ENCODE measurements at regions of chr14 and their contacts with region 1.

Region 1: DNA sequence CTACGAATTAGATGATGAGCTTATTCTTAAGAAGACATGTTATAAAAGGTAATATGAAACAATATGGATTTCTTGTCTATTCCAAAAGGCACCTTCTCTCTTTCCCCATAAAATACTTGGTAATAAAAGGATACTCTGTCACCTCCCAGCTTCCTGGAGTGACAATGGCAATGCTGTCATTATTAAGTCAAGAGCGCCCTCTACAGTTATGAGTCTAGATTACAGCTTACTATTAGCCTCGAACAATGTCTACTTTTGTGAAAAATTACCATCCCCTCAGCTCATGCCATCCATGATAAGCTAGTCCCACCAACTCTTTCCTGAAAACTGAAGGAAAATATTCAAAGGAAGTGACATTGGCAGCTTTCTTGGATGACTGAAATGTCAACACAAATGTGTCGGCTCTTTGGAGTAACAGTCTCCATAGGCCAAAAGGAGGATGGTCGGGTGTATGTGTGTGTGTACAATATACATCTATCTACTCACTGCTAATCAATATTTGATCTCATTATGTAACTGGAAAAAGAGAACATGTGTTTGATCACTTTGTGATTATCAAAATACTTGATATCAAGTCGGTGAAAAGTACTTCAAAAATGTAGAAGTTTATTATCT is 48.7 kb upstream of the CDKN3 start:
- DNase-seq: peak in 1 of 2 experiments; percentile 48
- H3K4me3 ChIP-seq: no peak overlapping the region
- H3K27ac ChIP-seq: no peak overlapping the region
- H3K4me1 ChIP-seq: peaks cover 4% of the 10 kb centered on the region
- H3K27me3 ChIP-seq: no peaks in the 10 kb centered on the region
- CTCF ChIP-seq: peak; percentile 91

Region 2: DNA sequence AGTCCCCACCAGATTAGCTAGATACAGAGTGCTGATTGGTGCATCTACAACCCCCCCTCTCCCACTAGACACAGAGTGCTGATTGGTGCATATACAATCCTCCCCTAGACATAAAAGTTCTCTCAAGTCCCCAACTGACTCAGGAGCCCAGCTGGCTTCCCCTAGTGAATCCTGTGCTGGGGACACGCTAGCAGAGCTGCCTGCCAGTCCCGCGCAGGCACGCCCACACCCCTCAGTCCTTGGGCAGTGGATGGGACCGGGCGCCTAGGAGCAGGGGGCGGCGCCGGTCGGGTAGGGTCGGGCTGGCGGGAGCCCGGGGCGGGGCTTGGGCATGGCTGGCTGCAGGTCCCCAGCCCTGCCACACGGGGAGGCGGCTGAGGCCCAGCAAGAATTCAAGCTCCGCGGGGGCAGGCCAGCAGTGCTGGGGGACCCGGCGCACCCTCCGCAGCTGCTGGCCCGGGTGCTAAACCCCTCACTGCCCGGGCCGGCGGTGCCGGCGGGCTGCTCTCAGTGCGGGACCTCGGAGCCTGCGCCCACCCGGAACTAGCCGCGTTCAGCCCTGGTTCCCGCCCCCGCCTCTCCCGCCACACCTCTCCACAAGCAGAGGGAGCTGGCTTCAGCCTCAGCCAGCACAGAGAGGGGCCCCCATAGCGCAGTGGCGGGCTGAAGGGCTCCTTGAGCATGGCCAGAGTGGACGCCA is 1130.7 kb before region 1 on chr14:
- CTCF ChIA-PET with region 1: no interaction called
- POLR2A ChIA-PET with region 1: interaction called, 10 read pairs
- intact Hi-C with region 1: no loop called
- DNase-seq: peak; percentile 55 to 84
- H3K4me3 ChIP-seq: peak overlapping the region; percentile 54
- H3K27ac ChIP-seq: no peak overlapping the region
- H3K4me1 ChIP-seq: no peaks in the 10 kb centered on the region
- H3K27me3 ChIP-seq: no peaks in the 10 kb centered on the region
- CTCF ChIP-seq: peak; percentile 60; the same call in 1 of the 2 replicates

Region 3: DNA sequence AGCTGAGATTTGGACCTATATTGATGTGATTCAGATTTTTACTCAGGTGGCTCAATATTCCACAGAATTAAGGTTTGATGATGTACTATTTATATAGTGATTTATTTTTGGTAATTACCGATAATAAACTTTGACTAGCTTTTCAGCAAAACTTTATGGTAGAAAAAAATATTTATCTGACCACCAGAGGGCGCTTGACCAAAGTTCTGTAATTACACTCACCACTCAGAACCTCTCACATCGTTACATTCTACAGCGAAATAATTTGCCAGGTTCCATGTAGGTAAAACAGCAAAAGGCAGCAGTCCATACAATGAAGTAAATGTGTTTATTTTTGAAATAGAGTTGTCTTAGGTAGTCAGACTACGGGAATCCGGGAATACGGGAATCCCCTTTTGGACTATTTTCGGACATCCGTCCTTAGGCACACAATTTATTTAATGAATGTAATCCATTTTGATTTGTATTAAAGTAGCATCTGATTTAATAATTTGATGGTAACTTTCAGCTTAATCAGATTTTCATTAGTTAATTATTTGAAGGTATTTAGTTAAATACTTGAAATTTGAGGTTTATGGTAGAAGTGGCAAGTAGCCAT is 1052.0 kb before region 1 on chr14:
- CTCF ChIA-PET with region 1: interaction called, 6 read pairs
- POLR2A ChIA-PET with region 1: no interaction called
- intact Hi-C with region 1: loop called (anchors 5 kb)
- DNase-seq: no peak
- H3K4me3 ChIP-seq: no peak overlapping the region
- H3K27ac ChIP-seq: no peak overlapping the region
- H3K4me1 ChIP-seq: no peaks in the 10 kb centered on the region
- H3K27me3 ChIP-seq: no peaks in the 10 kb centered on the region
- CTCF ChIP-seq: peak; percentile 85

Region 4: DNA sequence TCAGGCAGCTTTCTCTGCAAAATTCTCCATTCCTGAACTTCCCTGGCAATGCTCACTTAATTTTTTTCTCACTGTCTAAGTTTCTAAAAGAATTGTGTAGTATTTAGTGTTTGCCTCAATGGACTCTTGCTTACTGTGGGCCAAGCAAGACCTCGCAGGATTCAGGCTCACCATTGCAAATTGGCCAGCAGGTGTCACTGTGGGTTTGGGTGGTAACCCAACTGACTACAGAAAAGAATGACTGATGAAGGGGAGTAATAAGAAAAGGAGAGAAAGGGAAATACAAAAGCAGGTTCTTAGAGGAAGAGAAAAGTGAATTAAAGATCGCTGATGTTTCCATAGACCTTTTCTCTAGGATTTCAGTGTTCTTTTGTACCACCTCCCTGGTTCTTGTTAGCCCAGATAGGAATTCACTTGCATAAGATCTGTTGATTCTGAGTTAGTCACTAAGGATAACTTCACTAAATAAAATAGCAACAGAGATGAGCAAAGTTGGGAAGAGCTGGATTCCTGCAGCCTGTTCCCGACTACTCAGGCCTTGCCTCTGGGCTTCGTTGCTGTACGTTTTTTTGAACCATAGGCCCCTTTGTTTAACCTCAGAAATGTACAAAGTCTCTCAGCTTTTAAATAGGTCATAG is 808.5 kb before region 1 on chr14:
- CTCF ChIA-PET with region 1: interaction called, 8 read pairs
- POLR2A ChIA-PET with region 1: no interaction called
- intact Hi-C with region 1: loop called (anchors 1 kb)
- DNase-seq: peak; percentile 45 to 74
- H3K4me3 ChIP-seq: no peak overlapping the region
- H3K27ac ChIP-seq: no peak overlapping the region
- H3K4me1 ChIP-seq: no peaks in the 10 kb centered on the region
- H3K27me3 ChIP-seq: no peaks in the 10 kb centered on the region
- CTCF ChIP-seq: peak; percentile 88

Region 5: GRCh38 chr14:54291491-54292191 is 56.5 kb before region 1 on chr14:
- CTCF ChIA-PET with region 1: no interaction called
- POLR2A ChIA-PET with region 1: no interaction called
- intact Hi-C with region 1: no loop called
- DNase-seq: no peak
- H3K4me3 ChIP-seq: no peak overlapping the region
- H3K27ac ChIP-seq: no peak overlapping the region
- H3K4me1 ChIP-seq: peaks cover 5% of the 10 kb centered on the region; the same call in 1 of the 2 replicates
- H3K27me3 ChIP-seq: no peaks in the 10 kb centered on the region
- CTCF ChIP-seq: no peak